CD4-positive, alpha-beta memory T cell (primary cell): ENCODE measurements at regions of chr2 and their contacts with region 1.

Region 1: GRCh38 chr2:177164584-177165052 is 48.0 kb upstream of the HNRNPA3 start:
- DNase-seq: peak; percentile 70 to 76 (median 74)
- H3K4me3 ChIP-seq: no peak overlapping the region
- H3K4me3 Mint-ChIP-seq: no peak overlapping the region
- H3K27ac ChIP-seq: no peak overlapping the region
- H3K27ac Mint-ChIP-seq: no peak overlapping the region
- H3K4me1 ChIP-seq: peaks cover 25% of the 10 kb centered on the region
- H3K4me1 Mint-ChIP-seq: peaks cover 7 to 19% (median 12%) of the 10 kb centered on the region in 4 donors
- H3K27me3 ChIP-seq: no peaks in the 10 kb centered on the region
- H3K27me3 Mint-ChIP-seq: peaks cover 2 to 5% of the 10 kb centered on the region in 2 donors

Region 2: DNA sequence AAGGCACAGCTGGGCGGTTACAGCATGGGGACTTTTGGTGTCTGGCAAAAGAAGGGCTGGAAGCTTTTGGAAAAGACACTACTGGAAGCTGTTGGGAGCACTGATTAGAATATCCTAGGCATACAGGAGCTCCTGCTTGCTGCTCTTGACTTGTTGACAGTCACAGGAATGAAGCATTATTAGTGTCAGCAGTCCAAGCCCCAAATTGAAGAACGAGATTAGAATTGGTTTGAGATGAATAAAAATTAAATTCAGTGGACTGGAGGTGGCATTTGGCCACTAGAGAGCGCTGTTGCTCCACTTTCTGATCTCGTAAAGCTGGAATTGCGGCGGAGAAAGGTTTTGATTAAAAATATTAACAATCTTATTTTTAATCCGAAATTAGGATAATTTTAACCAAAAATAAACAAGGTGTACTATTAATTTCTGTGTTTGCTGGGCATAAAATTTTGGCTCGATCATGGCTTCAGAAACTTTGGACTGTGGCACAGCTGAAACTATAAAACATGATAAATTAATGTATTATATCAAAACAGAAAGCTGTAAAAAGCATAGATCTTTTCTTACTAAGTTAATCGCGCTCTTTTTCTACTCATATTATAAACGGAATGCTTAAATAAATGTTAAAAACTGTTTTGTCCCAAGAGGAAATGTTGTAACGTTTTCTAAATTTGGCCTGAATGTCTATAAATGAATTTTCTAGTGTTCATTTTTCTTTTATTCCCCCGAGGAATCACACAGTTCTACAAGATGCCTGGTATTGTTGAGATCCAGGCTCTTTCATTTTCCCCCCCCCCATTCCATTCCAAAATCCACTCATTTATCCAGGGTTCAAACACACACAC is 1037.5 kb before region 1 on chr2:
- CTCF ChIA-PET with region 1: interaction called, 7 read pairs
- POLR2A ChIA-PET with region 1: no interaction called
- intact Hi-C with region 1: loop called (anchors 5 kb)
- DNase-seq: peak; percentile 56 to 64 (median 58)
- H3K4me3 ChIP-seq: no peak overlapping the region
- H3K4me3 Mint-ChIP-seq: peak overlapping the region in 2 of 8 donors; percentile 7 to 17
- H3K27ac ChIP-seq: no peak overlapping the region
- H3K27ac Mint-ChIP-seq: peak overlapping the region in 2 of 7 donors; percentile 31 to 89
- H3K4me1 ChIP-seq: peaks cover 38% of the 10 kb centered on the region
- H3K4me1 Mint-ChIP-seq: peaks cover 10 to 45% (median 27%) of the 10 kb centered on the region in 4 donors
- H3K27me3 ChIP-seq: peaks cover 78% of the 10 kb centered on the region
- H3K27me3 Mint-ChIP-seq: peaks cover 61 to 63% of the 10 kb centered on the region in 2 donors

Region 3: DNA sequence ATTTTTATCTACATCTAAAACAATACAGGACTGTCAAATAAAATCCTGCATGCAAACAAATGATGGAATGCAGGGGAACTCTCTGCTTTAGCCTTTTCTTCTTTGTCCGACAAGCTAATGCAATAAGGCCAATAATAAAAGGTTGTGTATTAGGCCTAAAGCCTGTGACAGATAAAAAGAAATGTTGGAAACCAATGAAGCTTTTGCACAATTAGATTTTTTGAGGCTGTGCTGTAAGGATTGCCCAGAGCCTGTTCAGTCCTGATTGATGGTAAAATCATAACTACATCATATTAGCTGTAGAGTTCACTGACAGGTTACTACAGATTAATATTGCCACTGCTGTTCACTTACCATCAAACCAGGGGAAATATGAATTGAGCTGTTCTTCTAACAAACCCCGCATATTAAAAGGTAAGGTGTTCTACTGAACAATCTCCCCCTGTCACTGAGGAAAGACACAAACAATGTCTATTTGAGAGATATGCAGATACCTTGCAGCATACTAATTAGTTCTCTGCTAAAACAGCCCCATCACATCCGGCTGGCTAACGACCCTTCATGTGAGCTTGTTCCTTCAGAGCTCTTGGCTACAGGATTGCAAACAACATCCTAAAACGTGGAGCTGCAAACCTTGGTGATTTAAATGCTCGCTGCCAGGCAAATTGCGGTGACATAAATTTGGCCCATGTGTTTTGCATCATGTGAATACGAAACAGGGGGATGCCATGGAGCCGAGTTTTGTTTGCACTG is 590.0 kb before region 1 on chr2:
- CTCF ChIA-PET with region 1: no interaction called
- POLR2A ChIA-PET with region 1: no interaction called
- intact Hi-C with region 1: no loop called
- DNase-seq: no peak
- H3K4me3 ChIP-seq: no peak overlapping the region
- H3K4me3 Mint-ChIP-seq: no peak overlapping the region
- H3K27ac ChIP-seq: no peak overlapping the region
- H3K27ac Mint-ChIP-seq: no peak overlapping the region
- H3K4me1 ChIP-seq: no peaks in the 10 kb centered on the region
- H3K4me1 Mint-ChIP-seq: no peaks in the 10 kb centered on the region
- H3K27me3 ChIP-seq: no peaks in the 10 kb centered on the region
- H3K27me3 Mint-ChIP-seq: peaks cover 12 to 29% of the 10 kb centered on the region in 2 donors

Region 4: DNA sequence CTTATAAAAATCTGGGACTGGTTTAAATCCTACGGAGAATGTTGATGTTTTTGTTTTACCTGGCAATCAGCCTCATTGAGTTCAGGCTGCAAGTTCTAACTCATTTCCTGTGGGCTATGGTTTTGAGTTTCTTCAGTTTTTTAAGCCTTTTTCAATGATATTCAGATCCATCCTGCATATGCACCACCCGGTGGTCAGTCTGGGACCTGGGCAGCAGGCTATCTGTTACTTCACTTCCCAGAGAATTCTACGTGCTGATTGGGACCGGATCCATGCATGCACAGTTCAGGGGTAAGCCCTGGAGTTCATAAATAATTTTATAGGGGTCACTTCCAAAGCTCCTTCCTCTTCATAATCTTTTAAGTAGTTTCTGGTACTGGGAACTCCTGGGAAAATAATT is 291.2 kb before region 1 on chr2:
- CTCF ChIA-PET with region 1: no interaction called
- POLR2A ChIA-PET with region 1: no interaction called
- intact Hi-C with region 1: no loop called
- DNase-seq: no peak
- H3K4me3 ChIP-seq: no peak overlapping the region
- H3K4me3 Mint-ChIP-seq: no peak overlapping the region
- H3K27ac ChIP-seq: no peak overlapping the region
- H3K27ac Mint-ChIP-seq: peak overlapping the region in 1 of 7 donors; percentile 28
- H3K4me1 ChIP-seq: no peaks in the 10 kb centered on the region
- H3K4me1 Mint-ChIP-seq: no peaks in the 10 kb centered on the region
- H3K27me3 ChIP-seq: no peaks in the 10 kb centered on the region
- H3K27me3 Mint-ChIP-seq: peaks cover 5 to 9% of the 10 kb centered on the region in 2 donors

Region 5: DNA sequence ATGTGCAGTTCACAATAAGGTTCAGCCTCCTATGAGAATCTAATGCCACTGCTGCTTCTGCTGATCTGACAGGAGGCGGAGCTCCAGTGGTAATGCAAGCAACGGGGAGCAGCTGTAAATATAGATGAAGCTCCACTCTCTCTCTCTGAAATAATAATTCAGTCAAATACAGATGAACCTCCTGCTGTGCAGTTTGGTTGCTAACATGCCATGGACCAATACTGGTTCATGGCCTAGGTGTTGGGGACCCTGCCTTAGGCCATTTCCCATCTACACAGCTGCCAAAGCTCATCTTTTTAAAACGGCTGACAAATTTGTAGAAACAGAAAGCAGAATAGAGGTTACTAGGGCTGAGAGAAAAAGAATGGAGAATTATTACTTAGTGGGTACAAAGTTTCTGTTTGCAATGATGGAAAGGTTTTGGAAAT is 37.3 kb after region 1 on chr2:
- CTCF ChIA-PET with region 1: interaction called, 10 read pairs
- POLR2A ChIA-PET with region 1: no interaction called
- intact Hi-C with region 1: no loop called
- DNase-seq: no peak
- H3K4me3 ChIP-seq: no peak overlapping the region
- H3K4me3 Mint-ChIP-seq: peak overlapping the region in 1 of 8 donors; percentile 36
- H3K27ac ChIP-seq: no peak overlapping the region
- H3K27ac Mint-ChIP-seq: peak overlapping the region in 1 of 7 donors; percentile 81
- H3K4me1 ChIP-seq: no peaks in the 10 kb centered on the region
- H3K4me1 Mint-ChIP-seq: peaks cover 0 to 4% (median 3%) of the 10 kb centered on the region in 4 donors
- H3K27me3 ChIP-seq: no peaks in the 10 kb centered on the region
- H3K27me3 Mint-ChIP-seq: no peaks in the 10 kb centered on the region

Region 6: DNA sequence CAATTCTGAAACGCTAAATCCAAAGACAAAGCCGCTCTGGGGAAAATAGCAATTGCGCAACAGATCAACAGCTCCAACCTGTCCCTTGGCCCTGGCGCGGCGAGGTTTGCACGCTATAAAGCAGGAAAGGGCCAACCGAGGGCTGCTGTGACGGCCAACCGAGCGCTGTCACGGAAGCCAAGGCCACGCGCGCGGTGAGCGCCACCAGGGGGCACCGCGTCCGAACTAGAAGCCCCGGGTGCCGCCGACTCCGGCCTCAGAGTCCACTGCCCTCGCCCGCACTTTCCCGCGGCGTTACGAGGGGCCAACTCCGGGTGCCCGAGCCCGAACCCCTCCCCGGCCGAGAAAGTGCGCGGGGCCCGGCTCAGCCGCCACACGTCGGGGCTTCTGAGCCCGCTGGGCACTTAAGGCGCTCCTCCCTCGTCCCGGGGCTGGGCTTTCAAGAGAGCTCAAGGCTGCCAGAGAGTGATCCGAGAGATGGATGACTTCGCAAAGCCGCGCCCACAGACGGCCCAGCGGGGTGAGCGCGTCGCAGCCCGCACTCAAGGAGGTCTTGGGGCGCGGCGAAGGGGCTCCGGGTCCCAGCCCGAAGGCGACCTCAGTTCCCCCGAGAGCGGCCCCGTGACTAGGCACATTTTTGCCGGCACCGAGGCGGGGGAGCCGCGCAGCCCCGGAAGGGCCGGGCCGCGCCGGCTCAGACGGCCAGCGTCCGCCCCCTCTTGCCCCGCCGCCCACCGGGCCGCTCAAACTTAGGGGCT is 99.0 kb after region 1 on chr2:
- CTCF ChIA-PET with region 1: interaction called, 161 read pairs
- POLR2A ChIA-PET with region 1: interaction called, 159 read pairs
- intact Hi-C with region 1: loop called (anchors 1 kb)
- DNase-seq: peak; percentile 93 to 97 (median 94)
- H3K4me3 ChIP-seq: peak overlapping the region; percentile 57 to 100
- H3K4me3 Mint-ChIP-seq: peak overlapping the region; percentile 93 to 98 (median 96)
- H3K27ac ChIP-seq: peak overlapping the region; percentile 100
- H3K27ac Mint-ChIP-seq: peak overlapping the region; percentile 94 to 100 (median 99)
- H3K4me1 ChIP-seq: peaks cover 59% of the 10 kb centered on the region
- H3K4me1 Mint-ChIP-seq: peaks cover 36 to 75% (median 53%) of the 10 kb centered on the region in 4 donors
- H3K27me3 ChIP-seq: no peaks in the 10 kb centered on the region
- H3K27me3 Mint-ChIP-seq: no peaks in the 10 kb centered on the region

Region 7: DNA sequence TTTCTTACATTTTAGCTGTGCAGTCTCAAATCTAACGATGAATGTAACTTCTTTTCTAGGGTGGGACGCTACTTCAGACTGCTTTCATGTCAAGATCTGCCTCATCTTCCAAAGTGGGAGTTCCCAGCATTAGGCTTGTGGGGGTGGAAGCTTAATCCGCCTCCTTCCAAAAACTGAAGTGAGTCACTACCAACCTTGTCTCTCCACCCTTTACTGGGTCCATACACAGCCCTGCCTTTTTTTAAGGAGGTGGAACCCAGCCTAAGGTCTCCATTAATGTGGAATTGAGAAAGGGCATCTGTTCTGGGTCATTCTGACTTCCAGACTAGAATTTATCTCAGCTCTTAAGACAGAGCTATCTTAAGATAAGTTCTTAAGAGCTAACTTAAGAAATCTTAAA is 141.9 kb after region 1 on chr2:
- CTCF ChIA-PET with region 1: interaction called, 28 read pairs
- POLR2A ChIA-PET with region 1: interaction called, 11 read pairs
- intact Hi-C with region 1: no loop called
- DNase-seq: no peak
- H3K4me3 ChIP-seq: no peak overlapping the region
- H3K4me3 Mint-ChIP-seq: no peak overlapping the region
- H3K27ac ChIP-seq: no peak overlapping the region
- H3K27ac Mint-ChIP-seq: peak overlapping the region in 1 of 7 donors; percentile 9
- H3K4me1 ChIP-seq: peaks cover 19% of the 10 kb centered on the region
- H3K4me1 Mint-ChIP-seq: peaks cover 14 to 26% (median 18%) of the 10 kb centered on the region in 4 donors
- H3K27me3 ChIP-seq: no peaks in the 10 kb centered on the region
- H3K27me3 Mint-ChIP-seq: no peaks in the 10 kb centered on the region

Region 8: GRCh38 chr2:177413703-177414102 is 249.1 kb after region 1 on chr2:
- CTCF ChIA-PET with region 1: interaction called, 75 read pairs
- POLR2A ChIA-PET with region 1: interaction called, 6 read pairs
- intact Hi-C with region 1: loop called (anchors 1 kb)
- DNase-seq: no peak
- H3K4me3 ChIP-seq: no peak overlapping the region
- H3K4me3 Mint-ChIP-seq: no peak overlapping the region
- H3K27ac ChIP-seq: no peak overlapping the region
- H3K27ac Mint-ChIP-seq: peak overlapping the region in 4 of 7 donors; percentile 32 to 66 (median 50)
- H3K4me1 ChIP-seq: peaks cover 5% of the 10 kb centered on the region
- H3K4me1 Mint-ChIP-seq: peaks cover 26 to 32% (median 27%) of the 10 kb centered on the region in 4 donors
- H3K27me3 ChIP-seq: no peaks in the 10 kb centered on the region
- H3K27me3 Mint-ChIP-seq: no peaks in the 10 kb centered on the region

Region 9: GRCh38 chr2:177724398-177725287 is 560.0 kb after region 1 on chr2:
- CTCF ChIA-PET with region 1: interaction called, 16 read pairs
- POLR2A ChIA-PET with region 1: interaction called, 3 read pairs
- intact Hi-C with region 1: loop called (anchors 1 kb)
- DNase-seq: peak in 4 of 5 donors; percentile 16 to 28 (median 22)
- H3K4me3 ChIP-seq: no peak overlapping the region
- H3K4me3 Mint-ChIP-seq: no peak overlapping the region
- H3K27ac ChIP-seq: no peak overlapping the region
- H3K27ac Mint-ChIP-seq: no peak overlapping the region
- H3K4me1 ChIP-seq: no peaks in the 10 kb centered on the region
- H3K4me1 Mint-ChIP-seq: no peaks in the 10 kb centered on the region
- H3K27me3 ChIP-seq: no peaks in the 10 kb centered on the region
- H3K27me3 Mint-ChIP-seq: peaks cover 16 to 25% of the 10 kb centered on the region in 2 donors